ENCODE measurements at regions of chr5 and their contacts with region 1.

Region 1: GRCh38 chr5:132820162-132820754 is 7.2 kb downstream of the SOWAHA start:
- DNase-seq: peak; percentile 92 to 96 (median 94)
- H3K4me3 ChIP-seq: peak overlapping the region in 2 of 7 experiments; percentile 71 to 72
- H3K27ac ChIP-seq: no peak overlapping the region
- H3K4me1 ChIP-seq: peaks cover 0 to 22% (median 13%) of the 10 kb centered on the region in 4 experiments
- H3K27me3 ChIP-seq: peaks cover 0 to 56% (median 28%) of the 10 kb centered on the region in 5 experiments

Region 2: DNA sequence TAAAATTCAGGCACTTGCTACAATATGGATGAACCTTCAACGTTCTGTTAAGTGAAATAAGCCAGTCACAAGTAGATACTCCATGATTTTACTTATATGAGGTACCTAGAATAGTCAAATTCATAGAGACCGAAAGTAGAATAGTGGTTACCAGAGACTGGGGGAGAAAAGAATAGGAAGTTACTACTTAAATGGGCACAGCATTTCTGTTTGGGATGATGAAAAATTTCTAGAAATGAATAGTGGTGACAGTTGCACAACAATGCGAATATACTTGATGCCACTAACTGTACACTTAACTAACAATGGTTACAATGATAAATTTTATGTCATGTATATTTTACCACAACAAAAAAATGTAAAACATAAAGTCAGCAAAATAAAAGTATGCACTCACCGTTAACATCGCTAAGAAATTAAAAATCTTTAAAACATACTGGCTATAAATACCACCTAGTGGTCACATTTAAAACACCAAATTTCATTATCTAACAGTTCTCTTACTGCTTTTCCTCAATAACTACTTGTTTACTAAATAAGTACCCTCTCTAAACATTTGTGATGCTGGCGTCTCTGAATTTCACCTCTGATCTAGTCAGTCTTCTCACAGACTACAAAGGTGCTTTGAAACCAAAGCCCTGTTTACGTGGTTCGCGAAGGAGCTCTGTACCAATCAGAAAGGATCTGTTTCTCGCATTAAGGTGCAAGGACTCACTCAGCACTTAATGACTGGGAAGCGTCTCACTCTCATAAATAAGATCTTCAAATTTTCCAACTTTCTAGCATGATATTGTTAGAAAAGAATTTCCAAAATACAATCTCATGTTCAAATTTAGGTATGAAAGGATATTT is 105.6 kb before region 1 on chr5:
- CTCF ChIA-PET with region 1: interaction called, 10 read pairs
- POLR2A ChIA-PET with region 1: no interaction called
- DNase-seq: peak; percentile 20 to 46 (median 39)
- H3K4me3 ChIP-seq: no peak overlapping the region
- H3K27ac ChIP-seq: no peak overlapping the region
- H3K4me1 ChIP-seq: no peaks in the 10 kb centered on the region
- H3K27me3 ChIP-seq: no peaks in the 10 kb centered on the region

Region 3: DNA sequence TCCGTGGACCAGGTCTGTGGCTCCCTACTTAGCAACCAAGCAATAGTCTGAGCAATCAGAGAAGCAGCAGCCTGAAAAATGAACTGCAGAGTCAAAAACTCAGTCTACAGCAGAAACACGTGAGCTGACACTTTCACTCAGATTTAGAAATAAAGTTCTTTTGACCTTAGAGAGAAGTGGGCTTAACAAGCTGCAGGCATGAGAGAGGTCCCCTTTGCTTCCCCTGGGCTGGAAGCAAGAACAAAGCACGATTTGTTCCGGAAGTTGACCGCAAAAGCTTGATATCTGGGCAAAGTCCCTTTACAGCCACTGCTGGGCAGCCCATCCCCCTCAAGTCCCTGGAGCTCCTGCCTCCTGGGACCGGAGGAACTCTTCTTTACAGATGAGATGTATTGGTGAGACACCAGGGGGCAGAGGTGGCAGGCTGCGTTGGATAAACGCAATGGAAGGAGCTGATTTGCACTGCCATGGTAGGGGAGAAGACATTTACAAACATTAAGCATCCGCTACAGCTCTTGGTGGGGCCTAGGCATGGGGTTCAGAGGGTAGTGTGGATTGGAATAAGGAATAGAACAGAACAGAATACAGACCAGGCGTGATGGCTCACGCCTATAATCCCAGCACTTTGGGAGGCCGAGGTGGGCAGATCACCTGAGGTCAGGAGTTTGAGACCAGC is 13.0 kb before region 1 on chr5:
- CTCF ChIA-PET with region 1: interaction called, 43 read pairs
- POLR2A ChIA-PET with region 1: no interaction called
- DNase-seq: peak in 2 of 3 donors; percentile 43 to 52
- H3K4me3 ChIP-seq: no peak overlapping the region
- H3K27ac ChIP-seq: no peak overlapping the region
- H3K4me1 ChIP-seq: peaks cover 0 to 5% (median 2%) of the 10 kb centered on the region in 4 experiments
- H3K27me3 ChIP-seq: peaks cover 6 to 39% (median 15%) of the 10 kb centered on the region in 5 experiments

Region 4: DNA sequence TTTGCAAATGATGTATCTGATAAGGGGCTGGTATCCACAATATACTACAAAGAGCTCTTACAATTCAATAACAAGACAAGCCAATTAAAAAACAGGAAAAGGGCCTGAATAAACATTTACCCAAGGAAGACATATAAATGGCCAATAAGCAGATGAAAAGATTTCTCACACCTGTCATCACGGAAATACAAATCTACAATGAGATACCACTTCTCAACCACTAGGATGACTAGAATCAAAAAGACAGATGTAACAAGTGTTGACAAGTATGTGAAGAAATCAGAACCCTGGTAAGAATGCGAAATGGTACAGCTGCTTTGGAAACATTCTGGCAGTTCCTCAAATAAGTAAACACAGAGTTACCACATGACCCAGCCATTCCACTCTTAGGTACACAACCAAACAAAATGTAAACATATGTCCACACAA is 85.6 kb after region 1 on chr5:
- CTCF ChIA-PET with region 1: no interaction called
- POLR2A ChIA-PET with region 1: no interaction called
- DNase-seq: peak in 2 of 3 donors; percentile 22 to 28
- H3K4me3 ChIP-seq: no peak overlapping the region
- H3K27ac ChIP-seq: no peak overlapping the region
- H3K4me1 ChIP-seq: no peaks in the 10 kb centered on the region
- H3K27me3 ChIP-seq: no peaks in the 10 kb centered on the region